ENCODE measurements at regions of chr10 and their contacts with region 1.

Region 1: GRCh38 chr10:17029581-17030271 is 99.9 kb downstream of the CUBN start:
- DNase-seq: peak; percentile 72
- H3K4me3 Mint-ChIP-seq: peak overlapping the region; percentile 73
- H3K27ac Mint-ChIP-seq: peak overlapping the region; percentile 73
- H3K4me1 Mint-ChIP-seq: peaks cover 80% of the 10 kb centered on the region
- H3K27me3 Mint-ChIP-seq: peaks cover 8% of the 10 kb centered on the region

Region 2: DNA sequence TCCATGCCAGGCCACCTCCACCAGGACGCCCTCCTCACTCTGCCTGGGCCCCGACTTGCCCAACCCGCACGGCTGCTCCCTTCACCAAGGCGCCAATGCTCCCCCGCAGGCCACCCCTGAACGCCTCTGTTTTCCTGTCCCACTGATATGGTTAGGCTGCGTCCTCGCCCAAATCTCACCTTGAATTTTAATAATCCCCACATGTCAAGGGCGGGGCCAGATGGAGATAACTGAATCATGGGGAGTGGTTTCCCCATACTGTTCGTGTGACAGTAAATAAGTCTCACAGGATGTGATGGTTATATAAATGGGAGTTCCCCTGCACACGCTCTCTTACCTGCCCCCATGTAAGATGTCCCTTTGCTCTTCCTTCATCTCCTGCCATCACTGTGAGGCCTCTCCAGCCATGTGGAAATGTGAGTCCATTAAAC is 242.3 kb before region 1 on chr10:
- intact Hi-C with region 1: loop called (anchors 5 kb)
- DNase-seq: peak; percentile 49
- H3K4me3 Mint-ChIP-seq: peak overlapping the region; percentile 49
- H3K27ac Mint-ChIP-seq: peak overlapping the region; percentile 80
- H3K4me1 Mint-ChIP-seq: peaks cover 51% of the 10 kb centered on the region
- H3K27me3 Mint-ChIP-seq: no peaks in the 10 kb centered on the region

Region 3: GRCh38 chr10:16966991-16967865 is 62.5 kb before region 1 on chr10:
- intact Hi-C with region 1: loop called (anchors 1 kb)
- DNase-seq: no peak
- H3K4me3 Mint-ChIP-seq: peak overlapping the region; percentile 2
- H3K27ac Mint-ChIP-seq: peak overlapping the region; percentile 34
- H3K4me1 Mint-ChIP-seq: peaks cover 24% of the 10 kb centered on the region
- H3K27me3 Mint-ChIP-seq: peaks cover 22% of the 10 kb centered on the region

Region 4: DNA sequence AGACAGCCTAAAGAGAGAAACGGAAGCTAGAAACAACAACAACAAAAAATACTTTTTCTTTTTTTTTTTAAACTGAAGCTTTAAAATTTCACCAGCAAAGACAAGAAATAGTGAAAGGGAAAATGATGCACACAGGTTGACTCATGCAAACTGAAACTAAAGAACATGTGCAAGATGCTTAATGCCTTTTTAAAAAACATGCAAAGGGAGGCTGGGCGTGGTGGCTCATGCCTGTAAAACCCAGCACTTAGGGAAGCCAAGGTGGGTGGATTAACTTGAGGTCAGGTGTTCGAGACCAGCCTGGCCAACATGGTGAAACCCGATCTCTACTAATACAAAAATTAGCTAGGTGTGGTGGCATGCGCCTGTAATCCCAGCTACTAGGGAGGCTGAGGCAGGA is 115.0 kb after region 1 on chr10:
- intact Hi-C with region 1: loop called (anchors 1 kb)
- DNase-seq: peak; percentile 31
- H3K4me3 Mint-ChIP-seq: no peak overlapping the region
- H3K27ac Mint-ChIP-seq: peak overlapping the region; percentile 45
- H3K4me1 Mint-ChIP-seq: peaks cover 19% of the 10 kb centered on the region
- H3K27me3 Mint-ChIP-seq: no peaks in the 10 kb centered on the region

Region 5: DNA sequence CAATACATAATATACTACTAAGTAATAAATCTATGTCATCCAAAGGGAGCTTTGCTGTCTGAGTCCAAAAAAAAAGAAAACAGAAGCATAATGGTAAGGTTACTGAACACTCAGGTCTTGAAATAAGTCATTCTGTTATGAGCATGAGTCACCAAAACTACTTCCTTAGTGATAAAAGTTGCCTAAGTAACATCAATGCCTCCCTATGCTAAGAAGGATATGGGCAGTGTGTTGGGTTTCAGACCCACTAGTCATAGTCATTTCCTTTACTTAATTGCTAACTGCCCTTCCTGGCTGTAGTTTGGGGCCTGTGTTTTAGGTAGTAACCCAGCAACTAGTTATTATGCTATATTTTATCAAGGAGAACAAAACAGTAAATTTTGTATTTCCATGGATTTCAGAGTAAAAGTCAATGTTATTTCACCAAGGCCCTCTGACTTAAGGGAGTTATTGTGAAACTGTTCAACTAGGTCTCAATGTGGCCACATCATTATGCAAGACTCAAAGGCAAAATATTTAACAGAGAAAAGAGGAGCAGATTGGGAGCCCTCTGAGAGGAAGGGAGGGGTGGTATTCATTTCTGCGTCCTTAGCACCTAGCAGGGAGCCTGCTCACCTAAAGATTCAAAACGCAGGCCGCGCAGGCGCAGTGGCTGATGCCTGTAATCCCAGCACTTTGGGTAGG is 186.6 kb after region 1 on chr10:
- intact Hi-C with region 1: loop called (anchors 1 kb)
- DNase-seq: peak; percentile 34
- H3K4me3 Mint-ChIP-seq: peak overlapping the region; percentile 45
- H3K27ac Mint-ChIP-seq: peak overlapping the region; percentile 98
- H3K4me1 Mint-ChIP-seq: peaks cover 51% of the 10 kb centered on the region
- H3K27me3 Mint-ChIP-seq: no peaks in the 10 kb centered on the region

Region 6: DNA sequence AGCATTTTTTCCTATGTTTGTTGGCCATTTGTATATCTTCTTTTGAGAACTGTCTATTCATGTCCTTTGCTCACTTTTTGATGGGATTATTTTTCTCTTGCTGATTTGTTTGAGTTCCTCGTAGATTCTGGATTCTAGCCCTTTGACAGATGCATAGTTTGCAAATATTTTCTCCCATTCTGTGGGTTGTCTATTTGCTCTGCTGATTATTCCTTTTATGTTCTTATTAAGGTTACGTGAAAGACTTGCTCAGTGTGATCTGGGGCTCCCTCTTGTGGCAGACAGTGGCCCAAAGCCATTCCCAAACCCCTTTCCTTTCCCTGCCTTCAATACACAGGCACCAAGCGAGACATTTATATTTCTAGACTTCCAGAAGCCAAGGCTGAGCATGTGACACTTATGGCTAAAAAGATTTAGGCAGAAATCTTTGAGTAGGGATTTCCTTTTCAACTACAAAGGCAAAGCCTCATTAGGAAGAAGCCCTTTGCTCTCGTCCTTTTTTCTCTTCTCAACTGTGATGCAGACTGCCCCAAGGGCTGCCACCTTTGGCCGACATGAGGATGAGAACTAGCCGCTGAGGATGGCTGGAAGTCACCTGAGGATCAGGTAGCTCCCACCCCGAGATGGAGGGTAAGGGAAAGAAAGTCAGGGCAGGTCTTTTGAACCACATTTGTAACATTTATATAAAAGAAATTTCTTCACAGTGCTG is 401.1 kb after region 1 on chr10:
- intact Hi-C with region 1: loop called (anchors 5 kb)
- DNase-seq: peak; percentile 20
- H3K4me3 Mint-ChIP-seq: no peak overlapping the region
- H3K27ac Mint-ChIP-seq: no peak overlapping the region
- H3K4me1 Mint-ChIP-seq: peaks cover 59% of the 10 kb centered on the region
- H3K27me3 Mint-ChIP-seq: peaks cover 10% of the 10 kb centered on the region

Measured in activated T-helper 1 cell treated with anti-CD3 and anti-CD28 coated beads, Interleukin-12 subunit alpha, Interleukin-12 subunit beta, Interleukin-2, Interleukin-4 antibody, amounts not matched to agents 30 ng/mL and 10 ng/mL and 1 ng/mL, durations not matched to agents 14 hours and 24 hours and 36 hours (primary cell).